IMR-90 (cell line): ENCODE measurements at regions of chr10 and their contacts with region 1.

Region 1: GRCh38 chr10:22988581-22989360 is 60.9 kb downstream of the ARMC3 start:
- DNase-seq: peak; percentile 47
- ATAC-seq: peak; percentile 79
- H3K4me3 ChIP-seq: no peak overlapping the region
- H3K27ac ChIP-seq: no peak overlapping the region
- H3K4me1 ChIP-seq: no peaks in the 10 kb centered on the region
- H3K27me3 ChIP-seq: peaks cover 22% of the 10 kb centered on the region
- CTCF ChIP-seq: peak; percentile 98
- POLR2A ChIP-seq: no peak
- RAD21 ChIP-seq: peak; percentile 98

Region 2: DNA sequence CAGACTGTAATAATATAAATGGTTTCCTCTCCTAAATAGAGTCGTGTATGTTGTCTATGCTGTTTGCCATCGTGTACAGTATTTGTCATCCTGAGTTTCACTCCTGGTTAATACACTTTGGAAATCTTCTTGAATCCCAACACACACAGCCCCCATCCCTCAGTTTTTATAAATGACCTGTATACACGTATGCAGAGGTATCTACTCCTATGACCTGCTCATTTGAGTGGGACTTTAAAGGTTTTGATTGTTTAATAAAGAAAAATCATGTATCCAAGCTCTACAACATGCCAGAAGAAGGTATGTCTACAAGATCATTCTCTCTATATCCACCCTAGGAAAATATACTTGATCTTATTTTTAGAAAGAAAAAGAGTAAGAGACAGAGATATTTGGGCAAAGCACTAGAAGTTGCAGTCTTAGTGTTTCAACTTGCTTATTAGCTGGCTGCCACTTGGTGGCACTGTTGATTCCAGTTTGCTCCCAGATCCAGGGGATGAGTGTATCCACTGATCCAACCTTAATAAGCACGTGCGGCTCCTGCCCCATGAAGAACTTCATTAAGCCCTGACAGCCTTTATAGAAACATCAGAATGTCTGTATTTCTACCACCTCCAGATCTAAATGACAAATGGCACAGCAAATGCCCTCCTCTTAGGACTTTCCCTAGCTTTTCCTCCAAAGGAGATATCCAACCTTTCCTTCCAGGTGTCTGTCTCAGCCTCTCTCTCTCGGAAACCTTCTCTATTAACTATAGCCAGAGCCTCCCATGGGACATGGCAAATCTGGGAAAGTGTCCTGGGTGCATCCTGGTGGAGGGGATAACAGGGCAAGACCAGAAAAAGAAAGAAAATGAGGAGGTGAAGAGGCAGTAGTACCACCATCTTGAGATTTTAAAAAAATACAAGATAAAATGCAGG is 1910.1 kb before region 1 on chr10:
- CTCF ChIA-PET with region 1: no interaction called
- POLR2A ChIA-PET with region 1: no interaction called
- dilution Hi-C with region 1: no loop called
- in situ Hi-C with region 1: no loop called
- intact Hi-C with region 1: loop called (anchors 5 kb)
- DNase-seq: peak; percentile 61
- ATAC-seq: peak; percentile 98
- H3K4me3 ChIP-seq: no peak overlapping the region
- H3K27ac ChIP-seq: no peak overlapping the region
- H3K4me1 ChIP-seq: no peaks in the 10 kb centered on the region
- H3K27me3 ChIP-seq: 0 out of 2 replicates have a peak, but pooled peaks cover 2% of the 10 kb centered on the region
- CTCF ChIP-seq: peak; percentile 73
- POLR2A ChIP-seq: no peak
- RAD21 ChIP-seq: peak; percentile 84

Region 3: GRCh38 chr10:22010973-22011408 is 977.8 kb before region 1 on chr10:
- CTCF ChIA-PET with region 1: interaction called, 5 read pairs
- POLR2A ChIA-PET with region 1: no interaction called
- dilution Hi-C with region 1: no loop called
- in situ Hi-C with region 1: loop called (anchors 5 kb)
- intact Hi-C with region 1: loop called (anchors 1 kb)
- DNase-seq: peak; percentile 4
- ATAC-seq: peak; percentile 46; the same call in 1 of the 2 replicates
- H3K4me3 ChIP-seq: no peak overlapping the region
- H3K27ac ChIP-seq: no peak overlapping the region
- H3K4me1 ChIP-seq: no peaks in the 10 kb centered on the region
- H3K27me3 ChIP-seq: no peaks in the 10 kb centered on the region; the same call in 1 of the 2 replicates
- CTCF ChIP-seq: peak; percentile 48
- POLR2A ChIP-seq: no peak
- RAD21 ChIP-seq: peak; percentile 28; the same call in 1 of the 2 replicates

Region 4: DNA sequence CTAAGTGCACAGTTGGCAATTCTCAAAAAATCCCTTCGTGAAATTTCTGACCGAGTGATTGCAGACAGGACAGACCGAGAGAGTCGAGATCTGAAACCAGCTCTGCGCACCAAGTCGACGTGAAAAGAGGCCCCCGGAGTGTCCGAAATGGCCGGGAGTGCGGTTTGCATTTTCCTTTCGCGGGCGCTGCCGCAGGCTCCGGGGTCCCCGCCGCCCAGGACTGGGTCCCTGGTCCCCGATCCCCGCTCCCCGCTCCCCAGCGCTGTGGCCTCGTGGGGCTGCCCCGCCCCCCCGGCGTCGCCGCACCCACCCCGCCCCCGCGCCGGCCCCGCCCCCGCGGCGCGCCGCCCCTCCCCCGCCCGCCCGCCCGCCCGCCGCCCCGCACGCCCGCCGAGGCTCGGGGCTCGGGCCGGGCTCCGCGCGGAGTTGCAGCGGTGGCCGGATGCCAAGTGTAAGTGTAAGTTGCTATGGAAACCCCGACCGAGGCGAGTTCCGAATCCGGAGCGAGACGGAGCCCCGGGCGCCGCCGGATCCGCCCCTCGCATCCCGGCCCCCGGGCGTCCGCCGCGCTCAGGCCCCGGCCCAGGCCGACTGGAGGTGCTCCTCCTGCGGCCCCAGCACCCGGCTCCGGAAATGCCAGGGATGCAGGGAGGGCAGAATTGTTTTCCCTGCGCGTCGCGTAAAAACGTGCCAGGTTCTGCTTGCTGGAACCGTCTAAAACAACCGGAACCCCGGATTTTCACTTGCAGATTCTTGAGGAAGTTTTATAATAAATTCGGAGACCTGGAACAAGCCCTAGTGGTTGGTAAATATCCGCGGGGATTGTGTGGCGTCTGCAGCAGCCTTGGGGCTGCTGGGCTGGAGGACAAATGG is 663.3 kb before region 1 on chr10:
- CTCF ChIA-PET with region 1: interaction called, 3 read pairs
- POLR2A ChIA-PET with region 1: no interaction called
- dilution Hi-C with region 1: no loop called
- in situ Hi-C with region 1: no loop called
- intact Hi-C with region 1: loop called (anchors 5 kb)
- DNase-seq: peak; percentile 58
- ATAC-seq: peak; percentile 68
- H3K4me3 ChIP-seq: peak overlapping the region; percentile 61
- H3K27ac ChIP-seq: peak overlapping the region; percentile 36
- H3K4me1 ChIP-seq: no peaks in the 10 kb centered on the region; the same call in 1 of the 2 replicates
- H3K27me3 ChIP-seq: peaks cover 21% of the 10 kb centered on the region
- CTCF ChIP-seq: no peak
- POLR2A ChIP-seq: no peak
- RAD21 ChIP-seq: no peak

Region 5: DNA sequence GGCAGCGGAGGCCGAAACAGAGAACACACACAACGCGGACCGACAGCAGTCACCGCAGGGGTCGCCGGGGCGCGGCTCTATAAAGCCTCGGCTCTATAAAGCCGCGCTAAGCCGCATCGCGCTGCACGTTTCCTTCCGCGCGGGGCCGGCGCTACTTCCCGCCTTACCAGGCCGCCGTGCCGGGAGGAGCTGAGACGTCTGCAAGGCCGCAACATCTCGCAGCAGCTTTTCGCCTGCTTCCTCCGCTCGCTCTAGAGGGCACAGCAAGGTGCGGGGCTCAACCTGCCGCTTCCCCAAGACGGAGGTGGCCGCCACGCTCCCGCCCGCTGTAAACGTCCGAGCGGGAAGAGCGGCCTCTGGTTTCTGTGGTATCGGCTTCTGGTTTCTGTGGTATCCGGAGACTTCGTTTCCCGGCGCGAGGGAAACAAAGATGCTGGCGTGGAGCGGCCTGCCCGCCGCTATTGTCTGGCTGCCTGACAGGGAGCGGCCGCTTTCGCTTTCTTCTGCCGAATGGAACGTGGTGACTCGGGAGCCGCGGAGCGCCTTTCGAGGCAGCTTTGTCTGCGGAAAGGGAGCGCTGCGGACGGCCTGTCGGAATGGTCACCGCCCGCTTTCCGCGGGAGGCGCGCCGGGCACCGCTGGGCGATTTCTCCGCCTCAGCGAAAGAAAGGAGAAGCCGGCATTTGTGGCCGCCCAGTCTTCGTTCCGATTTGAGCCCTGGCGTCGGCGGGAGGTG is 551.7 kb before region 1 on chr10:
- CTCF ChIA-PET with region 1: no interaction called
- POLR2A ChIA-PET with region 1: no interaction called
- dilution Hi-C with region 1: no loop called
- in situ Hi-C with region 1: no loop called
- intact Hi-C with region 1: loop called (anchors 5 kb)
- DNase-seq: peak; percentile 89
- ATAC-seq: peak; percentile 83
- H3K4me3 ChIP-seq: peak overlapping the region; percentile 56
- H3K27ac ChIP-seq: peak overlapping the region; percentile 90
- H3K4me1 ChIP-seq: peaks cover 8% of the 10 kb centered on the region; the same call in 1 of the 2 replicates
- H3K27me3 ChIP-seq: peaks cover 7% of the 10 kb centered on the region
- CTCF ChIP-seq: no peak
- POLR2A ChIP-seq: peak; percentile 82; the same call in 1 of the 2 replicates
- RAD21 ChIP-seq: no peak

Region 6: DNA sequence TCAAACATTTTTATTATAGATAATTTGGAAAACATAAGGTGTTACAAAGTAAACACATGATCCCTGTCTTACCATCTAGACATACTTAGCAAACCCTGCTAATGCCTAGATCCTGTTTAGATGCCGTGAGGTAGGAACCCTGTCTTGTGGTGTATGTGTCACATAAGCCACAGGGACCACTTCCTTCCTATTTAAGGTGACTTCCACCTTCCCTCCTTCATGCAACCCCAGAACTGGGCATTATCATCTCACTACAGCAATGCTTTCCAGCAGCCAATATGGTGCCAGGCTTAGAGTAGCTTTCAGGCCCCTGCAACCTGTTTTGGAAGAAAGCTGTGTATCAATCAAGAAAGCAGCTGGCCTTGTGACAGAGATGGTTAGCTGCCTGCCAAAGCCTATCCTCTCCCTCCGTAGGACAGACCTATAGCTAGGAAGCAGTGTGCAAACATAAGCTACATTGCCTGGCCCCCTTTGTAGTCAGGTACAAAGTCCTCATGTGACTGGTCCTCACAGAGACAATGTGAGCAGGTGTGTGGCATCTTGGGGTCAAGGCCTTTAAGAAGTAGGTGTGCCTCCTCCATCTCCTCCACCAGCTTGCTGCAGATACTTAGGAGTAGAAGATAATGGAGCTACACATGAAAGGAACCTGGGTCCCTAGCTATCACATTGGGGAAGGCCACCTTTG is 496.7 kb before region 1 on chr10:
- CTCF ChIA-PET with region 1: no interaction called
- POLR2A ChIA-PET with region 1: no interaction called
- dilution Hi-C with region 1: no loop called
- in situ Hi-C with region 1: no loop called
- intact Hi-C with region 1: no loop called
- DNase-seq: no peak
- ATAC-seq: no peak
- H3K4me3 ChIP-seq: no peak overlapping the region
- H3K27ac ChIP-seq: no peak overlapping the region
- H3K4me1 ChIP-seq: no peaks in the 10 kb centered on the region
- H3K27me3 ChIP-seq: peaks cover 12% of the 10 kb centered on the region
- CTCF ChIP-seq: no peak
- POLR2A ChIP-seq: no peak
- RAD21 ChIP-seq: no peak

Region 7: GRCh38 chr10:22573820-22574569 is 414.8 kb before region 1 on chr10:
- CTCF ChIA-PET with region 1: interaction called, 6 read pairs
- POLR2A ChIA-PET with region 1: no interaction called
- dilution Hi-C with region 1: no loop called
- in situ Hi-C with region 1: loop called (anchors 10 kb)
- intact Hi-C with region 1: loop called (anchors 1 kb)
- DNase-seq: peak; percentile 41
- ATAC-seq: peak; percentile 42; the same call in 1 of the 2 replicates
- H3K4me3 ChIP-seq: no peak overlapping the region
- H3K27ac ChIP-seq: no peak overlapping the region
- H3K4me1 ChIP-seq: no peaks in the 10 kb centered on the region
- H3K27me3 ChIP-seq: no peaks in the 10 kb centered on the region
- CTCF ChIP-seq: peak; percentile 53
- POLR2A ChIP-seq: no peak
- RAD21 ChIP-seq: peak; percentile 65

Region 8: DNA sequence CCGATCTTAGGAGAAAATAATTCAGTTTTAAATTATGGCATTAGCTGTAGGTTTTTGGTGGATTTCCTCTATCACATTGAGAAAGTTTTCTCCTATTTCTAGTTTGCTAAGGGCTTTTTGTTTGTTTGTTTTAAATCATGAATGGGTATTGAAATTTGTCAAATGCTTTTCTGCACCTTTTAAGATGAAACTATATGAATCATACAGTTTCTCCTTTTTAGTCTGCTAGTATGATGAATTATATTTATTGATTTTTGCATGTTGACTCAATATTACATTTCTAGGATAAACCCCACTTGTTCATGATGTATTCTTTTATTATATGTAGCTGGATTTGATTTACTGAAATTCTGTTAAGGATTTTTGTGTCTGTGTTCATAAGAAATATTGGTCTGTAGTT is 204.1 kb before region 1 on chr10:
- CTCF ChIA-PET with region 1: no interaction called
- POLR2A ChIA-PET with region 1: no interaction called
- dilution Hi-C with region 1: no loop called
- in situ Hi-C with region 1: no loop called
- intact Hi-C with region 1: no loop called
- DNase-seq: no peak
- ATAC-seq: no peak
- H3K4me3 ChIP-seq: no peak overlapping the region
- H3K27ac ChIP-seq: no peak overlapping the region
- H3K4me1 ChIP-seq: no peaks in the 10 kb centered on the region
- H3K27me3 ChIP-seq: no peaks in the 10 kb centered on the region; the same call in 1 of the 2 replicates
- CTCF ChIP-seq: no peak
- POLR2A ChIP-seq: no peak
- RAD21 ChIP-seq: no peak

Region 9: DNA sequence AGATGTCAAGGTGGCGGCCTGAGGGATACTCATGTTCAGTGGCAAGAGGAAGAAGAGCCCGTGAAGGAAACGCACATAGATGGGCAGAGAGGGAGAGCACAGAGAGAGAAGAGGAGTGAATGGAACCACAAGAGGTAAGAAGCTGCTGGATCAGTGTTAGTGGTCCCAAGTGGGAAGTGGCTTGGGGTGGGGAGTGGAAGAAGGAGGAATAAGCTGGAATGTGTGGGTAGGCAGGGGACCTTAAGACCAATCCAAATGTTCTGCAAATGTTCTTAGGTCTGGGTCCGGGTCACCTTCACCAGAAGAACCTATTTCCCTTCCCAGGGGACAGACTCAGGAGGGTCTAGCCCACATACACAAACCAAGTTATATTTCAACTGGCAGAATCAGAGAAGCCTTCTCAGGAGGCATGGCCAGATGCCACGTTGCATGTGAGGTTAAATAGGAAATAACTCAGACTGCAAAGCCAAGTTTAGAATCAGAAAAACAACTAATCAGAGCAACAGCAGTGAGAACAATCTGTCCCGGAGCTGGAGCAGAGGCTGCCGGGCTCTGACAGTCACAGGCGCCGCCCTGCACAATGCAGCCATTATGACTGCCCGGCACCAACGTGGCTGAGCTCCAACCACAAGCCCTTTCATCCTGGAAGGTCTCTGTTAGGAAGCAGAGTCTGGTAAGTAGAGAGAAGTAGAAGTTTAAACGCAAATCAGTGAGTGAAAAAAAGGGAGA is 139.5 kb before region 1 on chr10:
- CTCF ChIA-PET with region 1: no interaction called
- POLR2A ChIA-PET with region 1: no interaction called
- dilution Hi-C with region 1: no loop called
- in situ Hi-C with region 1: no loop called
- intact Hi-C with region 1: no loop called
- DNase-seq: no peak
- ATAC-seq: peak; percentile 75
- H3K4me3 ChIP-seq: 0 out of 2 replicates have a peak overlapping the region, but pooled peaks have one; percentile 9
- H3K27ac ChIP-seq: no peak overlapping the region
- H3K4me1 ChIP-seq: no peaks in the 10 kb centered on the region
- H3K27me3 ChIP-seq: no peaks in the 10 kb centered on the region; the same call in 1 of the 2 replicates
- CTCF ChIP-seq: no peak
- POLR2A ChIP-seq: no peak
- RAD21 ChIP-seq: no peak

Region 10: GRCh38 chr10:23067939-23068775 is 79.4 kb after region 1 on chr10:
- CTCF ChIA-PET with region 1: no interaction called
- POLR2A ChIA-PET with region 1: no interaction called
- dilution Hi-C with region 1: no loop called
- in situ Hi-C with region 1: no loop called
- intact Hi-C with region 1: loop called (anchors 1 kb)
- DNase-seq: peak; percentile 63
- ATAC-seq: peak; percentile 84
- H3K4me3 ChIP-seq: no peak overlapping the region
- H3K27ac ChIP-seq: no peak overlapping the region
- H3K4me1 ChIP-seq: no peaks in the 10 kb centered on the region
- H3K27me3 ChIP-seq: peaks cover 6% of the 10 kb centered on the region
- CTCF ChIP-seq: peak; percentile 72
- POLR2A ChIP-seq: no peak
- RAD21 ChIP-seq: peak; percentile 67